Activated T-helper 2 cell treated with anti-CD3 and anti-CD28 coated beads, Interferon-gamma antibody, Interleukin-2, Interleukin-4, amounts not matched to agents 10 μg/mL and 5 μg/mL and 100 μg/mL, durations not matched to agents 14 hours and 24 hours and 36 hours (primary cell): ENCODE measurements at regions of chr14 and their contacts with region 1.

Region 1: DNA sequence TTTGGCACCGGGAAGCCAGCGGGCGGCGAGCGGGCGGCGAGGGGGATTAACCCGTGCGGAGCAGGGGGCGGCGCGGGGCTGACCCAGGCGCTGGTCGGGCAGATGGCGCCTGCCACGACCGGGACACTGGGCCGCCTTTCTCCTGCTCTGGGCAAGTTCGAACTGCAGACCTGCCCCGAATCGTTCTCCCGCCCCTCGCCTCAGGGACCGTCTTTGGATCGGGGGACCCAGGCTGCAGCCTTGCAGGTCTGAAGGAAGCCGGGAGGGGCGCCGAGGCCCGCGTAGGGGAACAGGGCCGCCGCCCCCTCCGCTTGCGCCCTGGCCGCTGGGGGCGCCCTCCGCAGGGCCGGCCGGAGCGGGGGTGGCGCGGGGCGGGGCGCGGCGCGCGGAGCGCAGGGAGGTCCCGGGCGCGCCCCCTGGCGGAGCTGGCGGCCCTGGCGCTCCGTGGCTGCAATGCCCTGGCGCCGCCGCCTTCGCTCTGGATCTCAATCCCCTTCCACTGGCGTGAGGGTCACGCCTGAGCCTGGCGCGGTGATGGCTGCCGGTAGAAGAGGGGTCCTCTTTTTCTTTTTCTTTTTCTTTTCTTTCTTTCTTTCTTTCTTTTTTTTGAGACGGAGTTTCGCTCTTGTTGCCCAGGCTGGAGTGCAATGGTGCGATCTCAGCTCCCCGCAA is 449 bp upstream of the LTBP2 start:
- DNase-seq: peak; percentile 76
- H3K4me3 Mint-ChIP-seq: peak overlapping the region; percentile 70
- H3K27ac Mint-ChIP-seq: no peak overlapping the region
- H3K4me1 Mint-ChIP-seq: peaks cover 30% of the 10 kb centered on the region
- H3K27me3 Mint-ChIP-seq: peaks cover 43% of the 10 kb centered on the region

Region 2: GRCh38 chr14:74362361-74362915 is 250.0 kb before region 1 on chr14:
- intact Hi-C with region 1: loop called (anchors 5 kb)
- DNase-seq: peak; percentile 35
- H3K4me3 Mint-ChIP-seq: no peak overlapping the region
- H3K27ac Mint-ChIP-seq: no peak overlapping the region
- H3K4me1 Mint-ChIP-seq: no peaks in the 10 kb centered on the region
- H3K27me3 Mint-ChIP-seq: peaks cover 9% of the 10 kb centered on the region

Region 3: DNA sequence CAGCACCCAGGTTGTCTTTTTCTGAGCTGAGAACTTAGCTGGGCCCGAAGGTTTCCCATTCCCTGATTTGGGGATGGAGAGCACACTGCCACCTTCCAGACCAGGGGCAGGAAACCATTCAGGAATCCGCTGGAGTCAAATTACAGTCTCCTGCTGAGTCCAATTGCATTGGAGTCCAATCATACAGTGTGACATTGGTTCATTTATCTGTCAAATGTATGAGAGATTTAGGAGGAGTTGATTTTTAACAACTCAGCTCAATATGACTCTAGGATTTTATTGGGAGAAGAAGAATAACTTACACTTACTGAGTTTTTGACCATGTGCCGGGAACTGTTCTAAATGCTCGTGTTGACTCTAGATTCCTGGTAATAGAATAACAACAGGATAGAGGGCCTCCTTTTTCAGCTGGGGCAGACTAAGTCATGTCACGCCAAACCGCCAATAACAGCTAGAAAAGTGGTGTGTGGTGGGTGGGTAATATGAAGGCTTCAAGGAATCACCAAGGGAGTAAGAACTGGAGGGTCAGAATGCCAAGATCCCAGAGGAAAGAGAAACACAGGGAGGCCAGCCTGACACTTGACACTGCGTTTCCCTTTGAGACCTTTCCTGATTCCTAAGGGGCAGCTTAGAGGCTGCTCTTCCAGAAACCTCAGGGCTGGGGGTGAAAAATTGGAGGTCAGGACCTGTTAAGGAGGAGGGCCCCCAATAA is 197.9 kb before region 1 on chr14:
- intact Hi-C with region 1: no loop called
- DNase-seq: no peak
- H3K4me3 Mint-ChIP-seq: no peak overlapping the region
- H3K27ac Mint-ChIP-seq: no peak overlapping the region
- H3K4me1 Mint-ChIP-seq: no peaks in the 10 kb centered on the region
- H3K27me3 Mint-ChIP-seq: peaks cover 7% of the 10 kb centered on the region

Region 4: GRCh38 chr14:74595006-74595735 is 17.3 kb before region 1 on chr14:
- intact Hi-C with region 1: no loop called
- DNase-seq: no peak
- H3K4me3 Mint-ChIP-seq: no peak overlapping the region
- H3K27ac Mint-ChIP-seq: no peak overlapping the region
- H3K4me1 Mint-ChIP-seq: no peaks in the 10 kb centered on the region
- H3K27me3 Mint-ChIP-seq: peaks cover 1% of the 10 kb centered on the region

Region 5: DNA sequence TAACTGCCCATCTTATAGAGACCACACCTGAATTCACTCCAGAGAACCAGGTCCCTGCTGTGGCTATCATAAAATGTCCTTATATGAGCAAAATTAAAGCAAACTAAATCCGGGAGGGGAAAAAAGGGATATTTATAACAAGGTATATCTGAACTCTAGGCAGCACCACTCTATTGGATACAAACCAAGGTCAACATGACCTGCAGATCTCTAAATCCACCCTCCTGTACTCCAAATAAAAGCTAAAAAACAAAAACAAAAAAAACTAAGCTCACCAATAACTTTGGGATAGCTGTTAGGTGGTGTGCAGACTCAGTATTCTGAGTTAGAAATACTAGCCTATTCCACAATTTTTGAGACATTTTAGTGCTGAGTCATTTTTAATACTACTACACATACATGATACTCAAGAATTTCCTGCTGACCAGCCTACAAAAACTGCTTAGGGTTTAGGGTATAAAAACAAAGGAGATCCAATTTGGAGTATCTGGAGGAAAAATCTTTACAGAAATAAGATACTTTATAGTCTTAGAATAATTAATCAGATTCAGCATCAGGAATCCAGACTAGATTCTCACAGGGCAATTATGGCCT is 46.1 kb after region 1 on chr14:
- intact Hi-C with region 1: no loop called
- DNase-seq: no peak
- H3K4me3 Mint-ChIP-seq: no peak overlapping the region
- H3K27ac Mint-ChIP-seq: no peak overlapping the region
- H3K4me1 Mint-ChIP-seq: peaks cover 1% of the 10 kb centered on the region
- H3K27me3 Mint-ChIP-seq: no peaks in the 10 kb centered on the region

Region 6: GRCh38 chr14:74712499-74713394 is 100.3 kb after region 1 on chr14 and contains the starts of genes AREL1 and FCF1:
- intact Hi-C with region 1: loop called (anchors 5 kb)
- DNase-seq: peak; percentile 80
- H3K4me3 Mint-ChIP-seq: peak within 1 kb of the TSS; percentile 98
- H3K27ac Mint-ChIP-seq: peak within 1 kb of the TSS; percentile 97
- H3K4me1 Mint-ChIP-seq: peaks cover 27% of the 10 kb centered on the region
- H3K27me3 Mint-ChIP-seq: no peaks in the 10 kb centered on the region
- total RNA-seq, gene AREL1: 40.0 and 46.9 TPM in 2 replicates
- total RNA-seq, gene FCF1: 61.8 and 62.8 TPM in 2 replicates

Region 7: GRCh38 chr14:74804219-74804826 is 191.8 kb after region 1 on chr14:
- intact Hi-C with region 1: loop called (anchors 2 kb)
- DNase-seq: no peak
- H3K4me3 Mint-ChIP-seq: no peak overlapping the region
- H3K27ac Mint-ChIP-seq: no peak overlapping the region
- H3K4me1 Mint-ChIP-seq: peaks cover 1% of the 10 kb centered on the region
- H3K27me3 Mint-ChIP-seq: no peaks in the 10 kb centered on the region